ENCODE measurements at regions of chr1 and their contacts with region 1.

Region 1: GRCh38 chr1:211520641-211521040 is 28.7 kb upstream of the RD3 start:
- DNase-seq: no peak
- H3K4me3 ChIP-seq: no peak overlapping the region
- H3K27ac ChIP-seq: no peak overlapping the region
- H3K4me1 ChIP-seq: peaks cover 33% of the 10 kb centered on the region
- H3K27me3 ChIP-seq: no peaks in the 10 kb centered on the region
- CTCF ChIP-seq: no peak; the same call in 1 of the 2 replicates

Region 2: DNA sequence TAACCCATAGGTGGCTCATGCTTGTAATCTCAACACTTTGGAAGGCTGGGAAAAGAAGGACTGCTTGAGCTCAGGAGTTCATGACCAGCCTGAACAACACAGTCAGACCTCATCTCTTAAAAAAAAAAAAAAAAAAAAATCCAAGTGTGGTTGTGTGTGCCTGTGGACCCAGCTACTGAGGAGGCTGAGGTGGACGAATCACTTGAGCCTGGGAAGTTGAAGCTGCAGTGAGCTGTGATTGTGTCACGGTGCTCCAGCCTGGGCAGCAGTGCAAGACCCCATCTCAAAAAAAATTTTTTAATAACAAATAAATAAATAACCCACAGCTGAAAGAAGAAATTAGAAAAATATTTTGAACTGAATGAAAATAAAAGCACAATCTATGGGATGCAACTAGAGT is 500.9 kb after region 1 on chr1:
- CTCF ChIA-PET with region 1: interaction called, 12 read pairs
- POLR2A ChIA-PET with region 1: no interaction called
- intact Hi-C with region 1: no loop called
- DNase-seq: no peak
- H3K4me3 ChIP-seq: no peak overlapping the region
- H3K27ac ChIP-seq: no peak overlapping the region
- H3K4me1 ChIP-seq: no peaks in the 10 kb centered on the region
- H3K27me3 ChIP-seq: no peaks in the 10 kb centered on the region
- CTCF ChIP-seq: no peak

Measured in PC-9 (cell line).